Calu3 (cell line): ENCODE measurements at regions of chr7 and their contacts with region 1.

Region 1: DNA sequence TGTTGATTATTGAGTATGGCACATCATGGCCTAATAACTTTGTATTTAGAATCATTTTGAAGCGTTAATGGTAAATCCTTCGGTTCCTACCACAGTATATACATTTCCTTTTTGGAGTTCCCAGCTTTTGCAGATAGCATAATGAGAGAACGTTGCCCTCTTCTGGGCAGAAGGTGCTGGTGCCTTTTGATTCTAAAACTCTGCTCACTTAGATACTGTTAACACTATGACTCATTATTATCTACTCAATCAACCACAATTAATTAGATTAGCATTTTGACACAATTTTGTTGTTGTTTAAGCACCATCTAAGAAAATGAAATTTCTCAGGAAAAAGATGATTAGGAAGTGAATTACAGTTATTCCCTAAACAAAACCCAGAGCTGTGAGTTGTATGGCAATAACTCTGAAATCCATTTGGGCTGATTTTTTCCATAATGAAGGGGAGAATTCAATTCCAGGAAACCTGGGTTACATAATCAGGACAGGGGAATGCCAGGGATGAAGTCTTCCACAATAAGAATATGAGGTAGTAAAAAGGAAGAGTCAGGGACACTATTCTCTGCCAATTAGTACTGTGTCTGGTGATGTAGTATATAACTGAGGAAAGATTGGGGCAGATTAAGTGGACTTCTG is 11.5 kb upstream of the DLD start:
- DNase-seq: peak; percentile 20
- H3K4me3 Mint-ChIP-seq: no peak overlapping the region
- H3K27ac Mint-ChIP-seq: no peak overlapping the region
- H3K4me1 Mint-ChIP-seq: peaks cover 4% of the 10 kb centered on the region
- H3K27me3 Mint-ChIP-seq: peaks cover 41% of the 10 kb centered on the region
- CTCF ChIP-seq: peak; percentile 48

Region 2: DNA sequence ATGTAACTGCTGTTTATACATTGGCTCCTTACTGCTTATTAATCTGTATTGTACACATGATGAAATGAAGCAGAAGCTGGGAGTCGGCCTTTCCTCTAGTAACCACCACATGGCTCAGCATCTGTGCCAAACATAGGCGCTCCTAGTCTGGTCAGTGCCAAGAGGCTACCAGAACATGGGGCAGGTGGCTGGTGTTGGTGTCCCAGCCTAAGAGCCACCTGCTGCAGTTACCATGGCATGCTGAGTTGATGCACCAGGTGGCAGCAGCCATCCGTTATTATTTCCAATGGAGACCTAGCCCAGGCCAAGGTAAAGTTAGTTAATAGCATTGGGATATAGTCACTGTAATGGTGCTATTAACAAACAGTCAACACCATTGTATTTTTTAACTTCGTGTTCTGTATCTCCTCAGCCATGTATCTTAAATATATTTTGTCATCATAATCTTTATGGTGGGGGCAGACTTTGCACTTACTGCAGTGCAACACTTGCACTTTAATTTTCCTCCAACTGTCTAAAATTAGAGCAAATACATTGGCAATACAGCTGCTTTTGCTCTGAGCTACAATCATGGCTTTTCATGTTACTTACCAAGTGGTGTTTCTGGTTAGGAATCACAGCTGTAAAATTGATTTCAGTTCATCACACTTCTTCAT is 677.6 kb before region 1 on chr7:
- CTCF ChIA-PET with region 1: no interaction called
- intact Hi-C with region 1: loop called (anchors 10 kb)
- DNase-seq: peak; percentile 41
- H3K4me3 Mint-ChIP-seq: no peak overlapping the region
- H3K27ac Mint-ChIP-seq: no peak overlapping the region
- H3K4me1 Mint-ChIP-seq: no peaks in the 10 kb centered on the region
- H3K27me3 Mint-ChIP-seq: no peaks in the 10 kb centered on the region
- CTCF ChIP-seq: no peak

Region 3: DNA sequence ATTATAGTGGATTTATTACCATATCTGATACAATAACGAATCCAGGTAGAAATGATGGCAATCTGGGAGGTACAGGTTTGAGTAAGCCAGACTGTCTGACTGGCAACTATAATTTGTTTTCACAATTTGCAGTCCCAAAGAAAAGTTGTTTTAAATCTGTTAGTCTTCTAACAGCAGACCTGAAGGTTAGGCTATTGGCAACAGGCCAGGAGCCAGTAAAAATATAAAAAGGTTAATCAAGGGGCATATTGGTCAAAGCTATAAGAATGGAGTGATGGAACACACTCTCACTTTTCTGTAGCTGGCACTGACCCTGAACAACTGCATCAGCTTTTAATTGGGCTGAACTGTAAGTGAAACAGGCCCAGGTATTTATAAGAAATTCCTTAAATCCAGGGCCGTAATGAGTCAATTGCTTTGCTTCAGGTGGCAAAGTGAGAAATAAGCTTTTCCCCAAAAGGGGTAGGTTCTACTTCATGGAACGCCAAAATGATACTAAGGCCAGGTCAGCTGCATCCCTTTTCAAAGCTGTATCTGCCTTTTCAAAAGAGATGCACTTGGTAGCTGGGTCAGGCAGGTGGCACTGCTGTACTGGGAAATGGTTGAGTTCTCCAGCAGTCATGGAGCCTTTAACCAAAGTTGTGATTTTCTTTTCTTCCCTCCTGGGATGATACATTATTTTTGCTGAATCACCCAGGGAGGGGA is 416.6 kb before region 1 on chr7:
- CTCF ChIA-PET with region 1: no interaction called
- intact Hi-C with region 1: loop called (anchors 5 kb)
- DNase-seq: peak; percentile 37
- H3K4me3 Mint-ChIP-seq: no peak overlapping the region
- H3K27ac Mint-ChIP-seq: no peak overlapping the region
- H3K4me1 Mint-ChIP-seq: no peaks in the 10 kb centered on the region
- H3K27me3 Mint-ChIP-seq: no peaks in the 10 kb centered on the region
- CTCF ChIP-seq: peak; percentile 25

Region 4: DNA sequence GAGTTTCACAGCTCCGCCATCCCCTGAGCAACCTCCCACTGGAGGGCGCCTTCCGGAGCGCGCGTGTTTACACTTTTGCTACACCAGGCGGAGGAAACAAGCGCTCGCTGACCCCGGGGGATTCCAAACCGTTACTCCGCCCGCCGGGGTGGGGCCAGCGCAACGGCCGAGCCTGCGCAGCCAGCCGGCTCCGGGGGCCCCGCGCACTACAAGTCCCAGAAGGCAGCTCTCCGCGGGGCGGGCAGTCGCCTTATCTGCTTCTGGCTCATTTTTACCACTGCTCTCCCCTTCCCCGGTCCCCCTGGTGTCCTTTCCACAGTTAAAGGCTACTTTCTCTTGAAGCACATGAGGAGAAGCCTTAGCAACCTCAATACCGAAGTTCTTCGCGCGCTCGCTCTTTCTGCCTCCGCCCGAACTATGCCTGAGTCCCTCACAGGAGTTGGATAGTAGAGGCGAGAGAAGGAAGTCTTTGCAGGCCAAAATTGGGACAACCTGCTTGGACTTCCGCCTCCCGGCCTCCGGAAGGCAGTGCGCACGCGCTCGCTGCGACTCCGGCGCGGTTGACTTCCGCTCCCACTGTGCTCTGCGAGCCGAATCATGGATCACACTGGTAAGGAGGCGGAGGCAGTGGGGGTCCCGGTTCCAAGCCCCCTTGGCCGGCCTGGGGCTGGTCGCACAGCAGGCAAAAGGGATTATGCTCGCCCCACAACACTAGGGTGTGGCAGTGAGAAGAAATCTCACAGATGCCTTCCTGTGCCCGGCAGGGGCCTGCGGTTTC is 135.8 kb before region 1 on chr7 and contains the start of gene CBLL1:
- CTCF ChIA-PET with region 1: interaction called, 20 read pairs
- intact Hi-C with region 1: loop called (anchors 2 kb)
- DNase-seq: peak; percentile 94
- H3K4me3 Mint-ChIP-seq: peak within 1 kb of the TSS; percentile 96
- H3K27ac Mint-ChIP-seq: peak within 1 kb of the TSS; percentile 96
- H3K4me1 Mint-ChIP-seq: peaks cover 22% of the 10 kb centered on the region
- H3K27me3 Mint-ChIP-seq: no peaks in the 10 kb centered on the region
- CTCF ChIP-seq: peak; percentile 44
- total RNA-seq, gene CBLL1: 23.9 and 25.3 TPM in 2 replicates

Region 5: GRCh38 chr7:107917763-107918651 is 38.5 kb after region 1 on chr7:
- CTCF ChIA-PET with region 1: no interaction called
- intact Hi-C with region 1: no loop called
- DNase-seq: no peak
- H3K4me3 Mint-ChIP-seq: no peak overlapping the region
- H3K27ac Mint-ChIP-seq: no peak overlapping the region
- H3K4me1 Mint-ChIP-seq: peaks cover 8% of the 10 kb centered on the region
- H3K27me3 Mint-ChIP-seq: no peaks in the 10 kb centered on the region
- CTCF ChIP-seq: no peak